Activated CD8-positive, alpha-beta T cell treated with anti-CD3 and anti-CD28 coated beads for 36 hours (primary cell): ENCODE measurements at regions of chr10 and their contacts with region 1.

Region 1: GRCh38 chr10:17228091-17228940 is at the start of gene VIM:
- DNase-seq: peak; percentile 95
- ATAC-seq: peak; percentile 46
- H3K4me3 Mint-ChIP-seq: peak within 1 kb of the TSS; percentile 94
- H3K27ac Mint-ChIP-seq: peak within 1 kb of the TSS; percentile 91
- H3K4me1 Mint-ChIP-seq: peaks cover 40% of the 10 kb centered on the region
- H3K27me3 Mint-ChIP-seq: no peaks in the 10 kb centered on the region
- CTCF ChIP-seq: no peak
- total RNA-seq, gene VIM: 590 to 602 TPM

Region 2: DNA sequence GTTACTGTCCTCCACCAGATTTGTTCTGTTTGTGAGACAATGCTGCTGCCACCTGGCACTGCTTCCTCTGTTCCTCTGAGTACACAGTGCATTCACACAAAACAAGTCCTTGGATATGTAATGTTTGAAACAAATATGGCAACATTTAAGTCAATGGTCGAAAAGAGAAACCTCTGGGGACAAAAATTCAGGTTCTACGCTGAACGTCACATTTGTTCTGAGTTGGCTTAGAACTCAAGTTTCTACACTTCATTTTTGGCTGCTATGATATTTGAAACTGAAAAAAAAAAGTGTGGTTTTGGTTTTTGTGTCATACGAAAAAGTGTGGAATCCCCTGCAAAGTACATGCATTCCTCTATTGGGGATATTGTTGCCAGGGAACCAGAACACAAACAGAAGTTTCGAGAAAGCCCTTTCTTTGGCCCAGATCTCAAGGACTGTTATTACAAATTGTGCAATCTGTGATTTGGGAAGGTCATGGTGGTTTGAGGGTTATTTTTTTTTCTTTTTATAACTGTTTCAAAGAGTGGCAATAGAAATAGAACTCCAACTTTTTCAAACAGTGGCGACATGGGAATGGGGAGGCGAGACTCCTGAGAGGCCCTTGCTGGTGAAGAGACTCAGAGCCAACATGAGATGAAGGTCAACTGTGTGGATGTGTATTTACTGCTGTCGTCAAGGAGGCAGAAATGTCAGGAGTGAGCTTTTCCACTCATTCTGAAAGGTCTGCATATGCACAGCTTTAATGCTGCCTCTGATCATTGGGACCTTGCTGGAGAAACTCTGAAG is 226.2 kb before region 1 on chr10:
- CTCF ChIA-PET with region 1: interaction called, 3 read pairs
- POLR2A ChIA-PET with region 1: interaction called, 4 read pairs
- intact Hi-C with region 1: loop called (anchors 2 kb)
- DNase-seq: peak; percentile 47
- ATAC-seq: peak; percentile 57
- H3K4me3 Mint-ChIP-seq: peak overlapping the region; percentile 33
- H3K27ac Mint-ChIP-seq: peak overlapping the region; percentile 93
- H3K4me1 Mint-ChIP-seq: peaks cover 52% of the 10 kb centered on the region
- H3K27me3 Mint-ChIP-seq: peaks cover 4% of the 10 kb centered on the region
- CTCF ChIP-seq: no peak

Region 3: DNA sequence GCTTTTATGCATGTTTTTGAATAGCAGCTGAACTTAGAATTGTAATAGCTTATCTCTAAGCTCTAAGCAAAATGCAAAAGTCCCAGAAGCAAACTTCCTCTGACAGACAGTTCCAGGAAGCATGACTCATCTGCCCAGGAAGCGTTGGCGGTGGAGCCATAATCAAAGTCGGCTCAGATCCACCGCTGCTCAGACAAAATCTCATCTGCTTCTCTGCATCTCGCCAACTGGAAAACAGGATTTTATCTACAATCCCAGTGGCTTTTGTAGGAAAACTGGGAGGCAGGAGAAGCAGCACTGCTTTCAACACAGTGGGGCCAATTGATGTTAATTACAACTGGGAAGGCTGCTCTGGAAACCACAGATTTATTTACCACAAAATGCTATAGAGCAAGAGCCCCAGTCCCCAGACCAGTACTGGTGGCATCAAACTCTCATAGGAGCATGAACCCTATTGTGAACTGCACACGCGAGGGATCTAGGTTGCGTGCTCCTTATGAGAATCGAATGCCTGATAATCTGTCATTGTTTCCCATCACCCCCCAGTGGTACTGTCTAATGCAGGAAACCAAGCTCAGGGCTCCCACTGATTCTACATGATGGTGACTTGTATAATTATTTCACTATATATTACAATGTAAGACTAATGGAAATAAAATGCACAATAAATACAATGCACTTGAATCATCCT is 198.6 kb before region 1 on chr10:
- CTCF ChIA-PET with region 1: interaction called, 3 read pairs
- POLR2A ChIA-PET with region 1: interaction called, 41 read pairs
- intact Hi-C with region 1: loop called (anchors 1 kb)
- DNase-seq: peak; percentile 97
- ATAC-seq: peak; percentile 32
- H3K4me3 Mint-ChIP-seq: peak overlapping the region; percentile 71
- H3K27ac Mint-ChIP-seq: peak overlapping the region; percentile 94
- H3K4me1 Mint-ChIP-seq: peaks cover 82% of the 10 kb centered on the region
- H3K27me3 Mint-ChIP-seq: no peaks in the 10 kb centered on the region
- CTCF ChIP-seq: no peak

Region 4: DNA sequence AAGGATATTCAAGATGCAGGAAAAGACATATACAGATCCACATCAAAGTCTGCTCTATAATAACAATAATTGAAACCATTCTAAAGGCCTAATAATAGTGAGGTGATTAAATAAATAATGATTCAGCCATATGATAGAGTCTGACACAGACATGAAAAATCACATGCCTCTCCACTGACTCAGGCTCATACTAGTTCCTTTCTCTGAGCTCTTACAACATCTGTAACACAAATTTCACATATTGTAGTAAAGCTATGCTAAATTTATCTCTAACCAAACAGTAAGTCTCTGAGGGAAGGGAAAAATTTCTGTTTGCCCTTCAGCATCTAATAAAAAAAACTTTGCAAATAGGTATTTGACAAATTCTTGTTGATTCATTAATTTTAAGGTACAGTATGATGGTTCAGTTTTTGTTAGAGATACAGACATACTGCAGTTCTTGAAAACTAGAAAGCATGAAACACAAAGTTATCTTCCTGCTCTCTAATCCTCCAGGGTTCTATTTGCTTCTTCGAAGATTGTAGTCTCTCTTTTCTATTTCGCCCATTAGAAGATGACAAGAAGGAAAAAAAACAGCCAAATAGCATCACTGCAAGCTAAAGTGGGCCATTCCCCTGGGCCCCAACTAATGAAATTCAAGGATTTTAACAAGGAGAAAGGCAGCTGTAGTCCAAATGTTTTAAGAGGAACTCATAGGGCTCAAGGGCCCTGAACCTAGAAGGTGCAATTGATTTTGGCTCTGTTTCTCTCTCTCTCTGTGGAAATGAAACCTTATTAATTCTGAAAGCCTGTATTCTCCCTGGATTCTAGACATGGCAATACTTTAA is 152.6 kb before region 1 on chr10:
- CTCF ChIA-PET with region 1: no interaction called
- POLR2A ChIA-PET with region 1: no interaction called
- intact Hi-C with region 1: no loop called
- DNase-seq: no peak
- ATAC-seq: no peak
- H3K4me3 Mint-ChIP-seq: no peak overlapping the region
- H3K27ac Mint-ChIP-seq: no peak overlapping the region
- H3K4me1 Mint-ChIP-seq: peaks cover 25% of the 10 kb centered on the region
- H3K27me3 Mint-ChIP-seq: no peaks in the 10 kb centered on the region
- CTCF ChIP-seq: no peak

Region 5: DNA sequence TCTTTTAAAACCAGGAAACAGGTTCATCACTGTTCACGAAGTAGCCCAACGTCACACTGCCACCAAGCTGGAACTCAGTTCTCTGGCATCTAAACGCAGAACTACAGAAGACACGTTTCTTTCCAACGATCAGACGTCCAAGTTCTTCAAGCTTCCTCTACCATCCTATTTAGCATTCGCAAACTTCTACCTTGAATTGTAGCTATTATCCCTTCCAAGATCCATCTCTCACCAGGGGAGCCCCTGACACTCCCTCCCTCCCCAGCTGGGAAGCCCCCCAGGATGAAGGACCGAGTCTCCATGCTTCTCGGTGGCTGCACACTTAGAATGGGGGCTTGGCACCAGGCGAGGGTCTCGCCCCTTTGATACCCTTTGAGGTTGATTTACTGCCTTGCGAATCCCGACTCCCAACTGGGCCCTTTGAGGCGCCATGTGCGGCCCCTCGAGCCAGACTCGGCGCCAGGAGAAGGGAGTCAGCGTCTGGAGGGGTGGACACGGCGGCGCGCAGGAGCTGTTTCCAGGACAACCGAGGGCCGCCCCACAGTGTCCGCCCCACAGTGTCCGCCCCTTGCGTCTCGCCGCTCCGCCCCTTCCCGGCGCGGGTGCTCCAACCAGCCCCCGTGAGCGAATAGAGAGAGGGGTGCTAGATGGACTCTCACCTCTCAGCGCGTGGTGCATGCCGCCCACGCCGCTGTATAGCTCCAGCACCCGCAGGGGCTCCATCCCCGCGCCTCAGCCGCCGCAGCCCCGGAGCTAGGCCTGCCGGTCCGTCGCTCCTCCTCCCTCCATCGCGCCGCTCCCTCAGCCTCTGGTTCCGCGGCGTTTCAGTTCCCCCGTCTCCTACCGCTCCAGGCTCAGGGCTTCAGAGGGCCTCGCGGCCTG is 27.2 kb before region 1 on chr10 and contains the start of gene TRDMT1:
- CTCF ChIA-PET with region 1: interaction called, 35 read pairs
- POLR2A ChIA-PET with region 1: interaction called, 35 read pairs
- intact Hi-C with region 1: loop called (anchors 1 kb)
- DNase-seq: peak; percentile 85
- ATAC-seq: peak; percentile 92
- H3K4me3 Mint-ChIP-seq: peak within 1 kb of the TSS; percentile 94
- H3K27ac Mint-ChIP-seq: peak within 1 kb of the TSS; percentile 95
- H3K4me1 Mint-ChIP-seq: peaks cover 40% of the 10 kb centered on the region
- H3K27me3 Mint-ChIP-seq: no peaks in the 10 kb centered on the region
- CTCF ChIP-seq: no peak
- total RNA-seq, gene TRDMT1: 4.4 to 4.5 TPM

Region 6: DNA sequence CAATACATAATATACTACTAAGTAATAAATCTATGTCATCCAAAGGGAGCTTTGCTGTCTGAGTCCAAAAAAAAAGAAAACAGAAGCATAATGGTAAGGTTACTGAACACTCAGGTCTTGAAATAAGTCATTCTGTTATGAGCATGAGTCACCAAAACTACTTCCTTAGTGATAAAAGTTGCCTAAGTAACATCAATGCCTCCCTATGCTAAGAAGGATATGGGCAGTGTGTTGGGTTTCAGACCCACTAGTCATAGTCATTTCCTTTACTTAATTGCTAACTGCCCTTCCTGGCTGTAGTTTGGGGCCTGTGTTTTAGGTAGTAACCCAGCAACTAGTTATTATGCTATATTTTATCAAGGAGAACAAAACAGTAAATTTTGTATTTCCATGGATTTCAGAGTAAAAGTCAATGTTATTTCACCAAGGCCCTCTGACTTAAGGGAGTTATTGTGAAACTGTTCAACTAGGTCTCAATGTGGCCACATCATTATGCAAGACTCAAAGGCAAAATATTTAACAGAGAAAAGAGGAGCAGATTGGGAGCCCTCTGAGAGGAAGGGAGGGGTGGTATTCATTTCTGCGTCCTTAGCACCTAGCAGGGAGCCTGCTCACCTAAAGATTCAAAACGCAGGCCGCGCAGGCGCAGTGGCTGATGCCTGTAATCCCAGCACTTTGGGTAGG is 12.0 kb before region 1 on chr10:
- CTCF ChIA-PET with region 1: interaction called, 9 read pairs
- POLR2A ChIA-PET with region 1: interaction called, 30 read pairs
- intact Hi-C with region 1: no loop called
- DNase-seq: peak; percentile 54
- ATAC-seq: peak; percentile 96
- H3K4me3 Mint-ChIP-seq: peak overlapping the region; percentile 32
- H3K27ac Mint-ChIP-seq: peak overlapping the region; percentile 95
- H3K4me1 Mint-ChIP-seq: peaks cover 55% of the 10 kb centered on the region
- H3K27me3 Mint-ChIP-seq: no peaks in the 10 kb centered on the region
- CTCF ChIP-seq: no peak

Region 7: DNA sequence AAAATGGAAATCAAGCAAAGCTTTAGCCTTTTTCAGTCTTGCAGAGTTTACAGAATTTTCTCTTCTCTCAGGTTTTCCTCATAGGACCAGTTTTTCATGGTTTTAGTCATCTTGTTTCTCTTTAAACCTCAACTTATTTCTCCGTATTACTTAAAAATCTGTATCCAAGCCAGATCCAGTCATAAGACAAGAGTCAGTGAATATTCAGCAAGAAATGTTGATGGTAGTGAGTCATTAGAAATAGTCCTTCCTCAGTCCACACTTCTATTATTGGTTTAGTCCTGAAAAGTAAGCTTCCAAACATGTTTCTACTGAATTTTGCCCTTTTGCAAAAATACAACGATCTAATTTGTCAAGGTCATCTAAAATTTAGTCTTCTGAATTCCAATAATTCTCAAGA is 106.7 kb after region 1 on chr10:
- CTCF ChIA-PET with region 1: no interaction called
- POLR2A ChIA-PET with region 1: no interaction called
- intact Hi-C with region 1: no loop called
- DNase-seq: no peak
- ATAC-seq: no peak
- H3K4me3 Mint-ChIP-seq: no peak overlapping the region
- H3K27ac Mint-ChIP-seq: no peak overlapping the region
- H3K4me1 Mint-ChIP-seq: no peaks in the 10 kb centered on the region
- H3K27me3 Mint-ChIP-seq: no peaks in the 10 kb centered on the region
- CTCF ChIP-seq: no peak